A549 (cell line): ENCODE measurements at regions of chr10 and their contacts with region 1.

Region 1: DNA sequence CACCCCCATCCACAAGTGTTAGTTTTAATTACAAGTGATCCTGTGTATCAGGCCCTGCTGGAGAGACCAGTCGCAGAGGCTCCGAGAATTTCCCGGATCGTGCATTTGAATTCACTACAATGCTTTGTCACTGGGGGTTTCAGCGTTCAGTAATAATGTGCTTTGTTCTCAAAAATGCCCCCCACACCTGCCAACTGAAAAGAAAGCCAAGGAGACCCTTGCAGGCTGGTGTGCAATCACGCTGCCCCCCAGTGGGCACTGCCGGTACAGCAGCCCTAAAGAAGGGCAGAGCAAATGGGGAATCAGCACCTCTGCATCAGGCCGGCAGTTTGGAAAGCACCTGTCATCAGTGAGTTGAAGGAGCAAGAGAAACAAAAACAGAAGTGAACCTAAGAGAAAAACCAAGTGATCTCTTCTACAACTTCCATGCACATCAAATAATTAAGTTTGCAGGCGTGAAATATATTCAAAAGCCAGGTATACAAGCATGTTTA is 177.6 kb downstream of the PARD3 start:
- DNase-seq: peak; percentile 22 to 67
- ATAC-seq: peak; percentile 72 to 77; a peak in 5 of 6 replicates
- H3K4me3 ChIP-seq: no peak overlapping the region
- H3K27ac ChIP-seq: peak overlapping the region; percentile 79 to 86
- H3K4me1 ChIP-seq: peaks cover 47% of the 10 kb centered on the region
- CTCF ChIP-seq: peak; percentile 97
- EP300 ChIP-seq: no peak
- POLR2A ChIP-seq: no peak
- RAD21 ChIP-seq: peak; percentile 97 to 98

Region 2: GRCh38 chr10:33330543-33331378 is 1306.7 kb before region 1 on chr10:
- CTCF ChIA-PET with region 1: interaction called, 22 read pairs
- POLR2A ChIA-PET with region 1: interaction called, 3 read pairs
- DNase-seq: peak; percentile 60 to 87
- ATAC-seq: peak in 1 of 2 experiments; percentile 36; a peak in 3 of 6 replicates
- H3K4me3 ChIP-seq: peak overlapping the region; percentile 85
- H3K27ac ChIP-seq: peak overlapping the region; percentile 99
- H3K4me1 ChIP-seq: peaks cover 46% of the 10 kb centered on the region
- CTCF ChIP-seq: peak; percentile 92
- EP300 ChIP-seq: no peak
- POLR2A ChIP-seq: no peak
- RAD21 ChIP-seq: peak; percentile 89 to 92

Region 3: DNA sequence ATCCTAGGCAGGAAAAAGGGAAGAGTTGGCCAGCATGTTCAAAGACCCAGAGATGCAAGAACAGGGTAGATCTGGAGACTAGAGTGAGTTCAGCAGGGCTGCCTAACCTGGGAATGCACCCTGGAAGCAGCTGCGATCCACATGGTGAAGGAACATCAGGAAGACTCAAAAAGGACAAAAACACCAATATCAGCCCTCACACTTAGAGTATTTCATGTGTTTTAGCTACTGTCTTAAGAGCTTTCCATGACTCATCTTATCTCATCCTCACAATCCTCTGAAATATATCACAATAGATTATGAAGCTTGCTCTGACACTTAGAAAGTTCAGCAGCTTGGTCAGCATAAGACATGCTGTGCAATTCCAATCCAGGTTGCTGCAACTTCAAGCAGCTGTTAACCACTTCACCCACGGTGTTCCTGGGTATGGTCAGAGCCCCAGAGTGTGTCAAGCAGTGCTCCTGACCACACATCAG is 203.3 kb before region 1 on chr10:
- CTCF ChIA-PET with region 1: interaction called, 10 read pairs
- POLR2A ChIA-PET with region 1: no interaction called
- DNase-seq: peak in 1 of 2 experiments; percentile 56
- ATAC-seq: peak; percentile 74 to 81; a peak in 5 of 6 replicates
- H3K4me3 ChIP-seq: no peak overlapping the region
- H3K27ac ChIP-seq: peak overlapping the region; percentile 76 to 91
- H3K4me1 ChIP-seq: peaks cover 66% of the 10 kb centered on the region
- CTCF ChIP-seq: no peak
- EP300 ChIP-seq: no peak
- POLR2A ChIP-seq: no peak
- RAD21 ChIP-seq: no peak; a peak in 1 of 5 replicates

Region 4: GRCh38 chr10:34522546-34522945 is 114.9 kb before region 1 on chr10:
- CTCF ChIA-PET with region 1: interaction called, 84 read pairs
- POLR2A ChIA-PET with region 1: interaction called, 7 read pairs
- DNase-seq: peak; percentile 36 to 78
- ATAC-seq: peak in 1 of 2 experiments; percentile 49; a peak in 3 of 6 replicates
- H3K4me3 ChIP-seq: peak overlapping the region; percentile 15; the same call in 1 of the 3 replicates
- H3K27ac ChIP-seq: peak overlapping the region; percentile 86 to 97
- H3K4me1 ChIP-seq: peaks cover 61% of the 10 kb centered on the region
- CTCF ChIP-seq: peak; percentile 62
- EP300 ChIP-seq: no peak
- POLR2A ChIP-seq: no peak
- RAD21 ChIP-seq: peak; percentile 67 to 75

Region 5: DNA sequence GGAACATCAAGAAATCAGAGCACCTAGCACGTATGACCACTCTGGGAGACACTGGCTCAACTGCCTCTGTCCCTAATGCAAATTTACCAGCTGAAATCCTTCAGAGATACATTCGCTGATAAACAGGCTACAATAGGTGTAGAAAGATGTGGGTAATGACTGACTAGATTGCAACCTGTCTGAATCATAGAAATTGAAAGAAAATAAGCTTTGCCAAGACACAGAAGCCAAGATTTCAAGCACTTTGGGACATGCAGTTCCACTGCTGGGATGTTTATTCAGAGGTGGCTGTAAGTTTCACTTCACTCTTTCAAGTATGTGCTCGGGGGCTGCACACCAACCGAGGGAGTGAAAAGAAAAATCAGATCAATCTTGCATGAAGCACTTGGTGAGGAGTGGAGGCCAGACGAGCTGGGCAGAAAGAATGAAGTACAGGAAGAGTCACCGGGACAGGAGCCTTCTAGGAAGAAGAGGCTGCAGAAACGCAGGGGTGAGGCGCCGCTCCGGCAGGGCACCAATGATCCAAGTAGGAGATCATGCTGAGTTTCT is 99.1 kb before region 1 on chr10:
- CTCF ChIA-PET with region 1: interaction called, 10 read pairs
- POLR2A ChIA-PET with region 1: no interaction called
- DNase-seq: peak; percentile 19 to 45
- ATAC-seq: peak; percentile 57 to 66; a peak in 5 of 6 replicates
- H3K4me3 ChIP-seq: peak overlapping the region; percentile 31
- H3K27ac ChIP-seq: peak overlapping the region; percentile 81 to 86
- H3K4me1 ChIP-seq: peaks cover 56% of the 10 kb centered on the region
- CTCF ChIP-seq: no peak
- EP300 ChIP-seq: no peak
- POLR2A ChIP-seq: no peak
- RAD21 ChIP-seq: no peak

Region 6: DNA sequence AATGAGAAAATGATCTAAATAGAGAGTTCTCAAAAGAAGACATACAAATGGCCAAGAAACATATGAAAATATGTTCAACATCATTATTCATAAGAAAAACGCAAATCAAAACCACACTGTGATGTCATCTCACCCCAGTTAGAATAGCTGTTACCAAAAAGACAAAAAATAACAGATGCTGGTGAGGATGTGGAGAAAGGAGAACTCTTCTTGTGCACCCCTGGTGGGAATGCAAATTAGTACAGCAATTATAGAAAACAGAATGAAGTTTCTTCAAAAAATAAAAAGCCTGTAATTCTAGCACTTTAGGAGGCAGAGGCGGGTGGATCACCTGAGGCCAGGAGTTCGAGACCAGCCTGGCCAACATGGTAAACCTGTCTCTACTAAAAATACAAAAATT is 21.7 kb before region 1 on chr10:
- CTCF ChIA-PET with region 1: interaction called, 55 read pairs
- POLR2A ChIA-PET with region 1: no interaction called
- DNase-seq: no peak
- ATAC-seq: no peak
- H3K4me3 ChIP-seq: no peak overlapping the region
- H3K27ac ChIP-seq: no peak overlapping the region
- H3K4me1 ChIP-seq: peaks cover 15% of the 10 kb centered on the region
- CTCF ChIP-seq: no peak
- EP300 ChIP-seq: no peak
- POLR2A ChIP-seq: no peak
- RAD21 ChIP-seq: no peak

Region 7: DNA sequence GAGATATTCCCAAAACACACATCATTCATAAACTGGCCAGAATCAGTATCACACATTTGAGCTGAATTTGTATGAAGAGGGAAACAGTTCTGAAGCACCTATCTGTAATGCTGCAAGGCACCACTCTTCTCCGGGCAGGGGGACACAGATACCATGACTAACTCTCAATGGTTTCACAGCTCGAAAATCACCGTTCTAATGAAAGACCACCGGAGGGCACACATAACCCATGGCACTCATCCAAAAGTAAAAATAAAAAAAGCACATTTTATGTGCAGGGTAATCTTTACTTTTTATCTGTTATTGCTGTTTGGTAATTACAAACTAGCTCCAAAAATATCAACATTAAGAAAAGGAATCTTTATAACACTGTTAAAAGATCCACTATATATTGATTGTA is 40.1 kb after region 1 on chr10:
- CTCF ChIA-PET with region 1: no interaction called
- POLR2A ChIA-PET with region 1: no interaction called
- DNase-seq: no peak
- ATAC-seq: no peak
- H3K4me3 ChIP-seq: no peak overlapping the region
- H3K27ac ChIP-seq: no peak overlapping the region
- H3K4me1 ChIP-seq: peaks cover 4% of the 10 kb centered on the region; the same call in 2 of the 3 replicates
- CTCF ChIP-seq: no peak
- EP300 ChIP-seq: no peak
- POLR2A ChIP-seq: no peak
- RAD21 ChIP-seq: peak in 1 of 2 experiments; percentile 32; a peak in 3 of 5 replicates